ENCODE measurements at regions of chr18 and their contacts with region 1.

Region 1: DNA sequence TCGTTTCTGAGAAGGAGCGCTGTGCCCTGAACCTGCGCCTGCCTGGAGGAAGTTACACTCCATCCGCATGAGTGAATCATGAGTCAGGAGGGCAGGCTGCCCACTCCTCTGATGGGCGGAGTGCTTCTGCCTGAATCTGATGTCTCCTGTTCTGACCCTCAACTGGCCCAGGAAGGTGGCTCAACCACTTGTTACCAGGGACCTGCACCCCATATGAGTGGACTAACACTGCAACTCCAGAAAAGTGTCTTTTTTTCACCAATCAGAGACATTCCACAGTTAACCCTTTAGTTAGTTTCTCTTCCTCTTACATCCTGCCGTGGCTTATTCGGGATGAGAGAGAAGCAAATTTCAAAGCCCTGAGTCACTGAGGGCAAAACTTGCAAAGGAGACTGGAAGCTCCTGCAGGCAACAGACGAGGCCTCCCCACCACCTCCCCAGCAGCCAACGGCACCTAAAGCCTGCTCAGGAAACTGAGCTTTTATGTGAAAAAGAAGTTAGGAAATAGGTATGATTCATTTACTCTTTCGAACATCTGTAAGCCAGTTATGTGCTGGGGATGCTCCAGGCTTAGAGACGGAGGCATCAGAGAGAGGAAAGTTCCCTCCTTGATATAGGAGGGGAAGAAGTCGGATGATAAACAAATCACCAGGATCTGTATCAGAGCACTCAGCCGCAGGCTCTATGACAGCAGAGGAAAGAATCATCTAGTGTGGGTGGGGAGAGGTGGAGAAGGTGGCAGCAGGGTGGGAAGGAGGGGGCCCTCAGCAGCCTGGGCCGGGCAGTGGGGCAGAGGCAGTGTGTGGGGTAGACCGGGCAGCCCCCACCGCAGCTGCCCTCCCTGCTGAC is 30.9 kb downstream of the MBP start:
- DNase-seq: peak; percentile 82
- H3K4me3 Mint-ChIP-seq: peak overlapping the region; percentile 83
- H3K27ac Mint-ChIP-seq: peak overlapping the region; percentile 97
- H3K4me1 Mint-ChIP-seq: peaks cover 88% of the 10 kb centered on the region
- H3K27me3 Mint-ChIP-seq: no peaks in the 10 kb centered on the region

Region 2: DNA sequence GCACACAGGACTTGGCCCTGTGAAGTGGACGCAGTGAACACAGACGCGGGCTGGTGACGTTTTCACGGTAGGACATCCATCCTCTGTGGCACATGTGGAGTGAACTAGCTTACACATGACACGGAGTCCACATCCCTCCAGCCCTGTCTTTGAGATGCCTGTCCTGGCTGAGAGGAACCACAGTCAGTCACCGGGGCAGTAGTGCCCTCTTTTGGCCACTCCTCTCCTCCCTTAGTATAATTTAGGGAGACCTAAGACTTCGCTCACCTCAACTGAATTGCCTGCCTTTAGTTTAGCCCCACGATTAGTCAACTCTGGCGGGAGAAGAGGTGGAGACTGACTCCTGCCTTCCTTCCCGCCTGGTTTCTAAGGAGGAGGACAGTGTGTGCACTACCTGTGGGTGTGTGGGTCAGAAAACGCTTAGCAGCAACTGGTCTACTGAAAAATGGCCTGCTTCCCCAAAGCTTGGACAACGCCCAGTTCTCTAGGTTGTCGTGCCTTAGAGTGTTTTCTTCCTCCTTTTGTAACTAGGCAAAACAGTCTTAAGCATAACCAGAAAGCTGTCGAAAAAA is 39.6 kb before region 1 on chr18:
- intact Hi-C with region 1: loop called (anchors 1 kb)
- DNase-seq: peak; percentile 83
- H3K4me3 Mint-ChIP-seq: peak overlapping the region; percentile 67
- H3K27ac Mint-ChIP-seq: peak overlapping the region; percentile 97
- H3K4me1 Mint-ChIP-seq: peaks cover 81% of the 10 kb centered on the region
- H3K27me3 Mint-ChIP-seq: no peaks in the 10 kb centered on the region

Region 3: GRCh38 chr18:77067291-77068061 is 34.2 kb before region 1 on chr18:
- intact Hi-C with region 1: loop called (anchors 1 kb)
- DNase-seq: peak; percentile 91
- H3K4me3 Mint-ChIP-seq: peak overlapping the region; percentile 66
- H3K27ac Mint-ChIP-seq: peak overlapping the region; percentile 97
- H3K4me1 Mint-ChIP-seq: peaks cover 99% of the 10 kb centered on the region
- H3K27me3 Mint-ChIP-seq: no peaks in the 10 kb centered on the region

Region 4: GRCh38 chr18:77124452-77124922 is 22.9 kb after region 1 on chr18:
- intact Hi-C with region 1: loop called (anchors 1 kb)
- DNase-seq: peak; percentile 87
- H3K4me3 Mint-ChIP-seq: peak overlapping the region; percentile 81
- H3K27ac Mint-ChIP-seq: peak overlapping the region; percentile 89
- H3K4me1 Mint-ChIP-seq: peaks cover 78% of the 10 kb centered on the region
- H3K27me3 Mint-ChIP-seq: no peaks in the 10 kb centered on the region

Region 5: GRCh38 chr18:77132371-77133050 is 30.9 kb after region 1 on chr18 and contains the start of gene MBP:
- intact Hi-C with region 1: loop called (anchors 1 kb)
- DNase-seq: peak; percentile 92
- H3K4me3 Mint-ChIP-seq: peak within 1 kb of the TSS; percentile 100
- H3K27ac Mint-ChIP-seq: peak within 1 kb of the TSS; percentile 97
- H3K4me1 Mint-ChIP-seq: peaks cover 47% of the 10 kb centered on the region
- H3K27me3 Mint-ChIP-seq: no peaks in the 10 kb centered on the region
- total RNA-seq, gene MBP: 60.2 and 63.1 TPM in 2 replicates

Region 6: GRCh38 chr18:77207540-77207939 is 105.9 kb after region 1 on chr18:
- intact Hi-C with region 1: loop called (anchors 1 kb)
- DNase-seq: peak; percentile 70
- H3K4me3 Mint-ChIP-seq: peak overlapping the region; percentile 19
- H3K27ac Mint-ChIP-seq: peak overlapping the region; percentile 26
- H3K4me1 Mint-ChIP-seq: peaks cover 39% of the 10 kb centered on the region
- H3K27me3 Mint-ChIP-seq: no peaks in the 10 kb centered on the region

Measured in activated CD4-positive, alpha-beta T cell treated with anti-CD3 and anti-CD28 coated beads, Interleukin-2, amount 10 ng/mL, durations not matched to agents 24 days and 14 days (primary cell).